Heart left ventricle (tissue), 16 donors: ENCODE measurements at regions of chr12 and their contacts with region 1.

Region 1: GRCh38 chr12:104049903-104050356 is at the start of gene GLT8D2:
- DNase-seq: peak; percentile 51 to 78 (median 65)
- ATAC-seq: peak; percentile 41 to 81 (median 78)
- H3K4me3 ChIP-seq: peak within 1 kb of the TSS; percentile 20 to 66 (median 51)
- H3K27ac ChIP-seq: peak within 1 kb of the TSS in 10 of 12 donors; percentile 27 to 79 (median 58)
- H3K4me1 ChIP-seq: peaks cover 0 to 35% (median 21%) of the 10 kb centered on the region in 12 donors
- H3K27me3 ChIP-seq: peaks cover 0 to 19% (median 0%) of the 10 kb centered on the region in 9 donors
- CTCF ChIP-seq: no peak
- POLR2A ChIP-seq: no peak
- total RNA-seq, gene GLT8D2: 2.6 to 18.7 (median 6.9) TPM

Region 2: DNA sequence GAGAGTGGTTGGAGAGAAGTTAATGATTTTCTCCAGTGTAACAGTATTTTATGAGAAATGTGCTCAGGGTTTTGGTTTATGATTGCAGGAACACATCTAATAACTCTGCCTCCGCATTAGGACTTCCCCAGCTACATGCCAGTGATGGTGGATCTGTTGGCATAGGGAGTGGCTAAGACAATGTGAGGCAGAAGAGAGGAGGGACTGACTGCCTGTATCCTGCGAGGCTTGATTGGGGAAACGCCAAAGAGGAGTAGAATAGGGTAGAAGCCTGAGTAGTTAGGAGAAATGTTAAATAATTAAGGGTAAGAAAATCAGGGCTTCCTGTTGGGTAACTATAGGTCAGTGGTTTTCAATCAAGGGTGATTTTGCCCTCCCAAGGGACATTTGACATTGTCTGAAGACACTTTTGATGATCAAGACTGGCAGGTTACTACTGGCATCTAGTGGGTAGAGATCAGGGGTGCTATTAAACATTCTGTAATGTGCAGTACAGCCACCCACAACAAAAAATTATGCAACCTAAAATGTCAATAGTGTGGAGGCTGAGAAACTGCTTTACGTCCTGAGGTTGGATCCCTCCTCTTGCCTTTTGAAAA is 71.4 kb before region 1 on chr12:
- intact Hi-C with region 1: loop called in 2 of 10 experiments (anchors 5 to 10 kb)
- DNase-seq: no peak
- ATAC-seq: no peak
- H3K4me3 ChIP-seq: no peak overlapping the region
- H3K27ac ChIP-seq: no peak overlapping the region
- H3K4me1 ChIP-seq: peaks cover 0 to 10% (median 5%) of the 10 kb centered on the region in 12 donors
- H3K27me3 ChIP-seq: no peaks in the 10 kb centered on the region
- CTCF ChIP-seq: no peak
- POLR2A ChIP-seq: no peak

Region 3: GRCh38 chr12:103997286-103997900 is 52.5 kb before region 1 on chr12:
- intact Hi-C with region 1: loop called in 4 of 10 experiments (anchors 5 to 10 kb)
- DNase-seq: peak; percentile 26 to 77 (median 73)
- ATAC-seq: peak; percentile 81 to 89 (median 85)
- H3K4me3 ChIP-seq: peak overlapping the region in 3 of 12 donors; percentile 15 to 31 (median 16)
- H3K27ac ChIP-seq: peak overlapping the region in 11 of 12 donors; percentile 25 to 77 (median 59)
- H3K4me1 ChIP-seq: peaks cover 0 to 14% (median 0%) of the 10 kb centered on the region in 12 donors
- H3K27me3 ChIP-seq: no peaks in the 10 kb centered on the region
- CTCF ChIP-seq: no peak
- POLR2A ChIP-seq: no peak

Region 4: GRCh38 chr12:104011261-104011660 is 38.7 kb before region 1 on chr12:
- intact Hi-C with region 1: loop called in 1 of 10 experiments (anchors 5 kb)
- DNase-seq: no peak
- ATAC-seq: peak in 3 of 4 donors; percentile 32 to 56 (median 38)
- H3K4me3 ChIP-seq: no peak overlapping the region
- H3K27ac ChIP-seq: peak overlapping the region in 11 of 12 donors; percentile 19 to 72 (median 58)
- H3K4me1 ChIP-seq: peaks cover 0 to 18% (median 6%) of the 10 kb centered on the region in 12 donors
- H3K27me3 ChIP-seq: no peaks in the 10 kb centered on the region
- CTCF ChIP-seq: no peak
- POLR2A ChIP-seq: no peak

Region 5: GRCh38 chr12:104951759-104952509 is 902.0 kb after region 1 on chr12:
- intact Hi-C with region 1: no loop called
- DNase-seq: no peak
- ATAC-seq: no peak
- H3K4me3 ChIP-seq: no peak overlapping the region
- H3K27ac ChIP-seq: no peak overlapping the region
- H3K4me1 ChIP-seq: peaks cover 0 to 5% (median 0%) of the 10 kb centered on the region in 12 donors
- H3K27me3 ChIP-seq: no peaks in the 10 kb centered on the region
- CTCF ChIP-seq: no peak
- POLR2A ChIP-seq: no peak